ENCODE measurements at regions of chr5 and their contacts with region 1.

Region 1: DNA sequence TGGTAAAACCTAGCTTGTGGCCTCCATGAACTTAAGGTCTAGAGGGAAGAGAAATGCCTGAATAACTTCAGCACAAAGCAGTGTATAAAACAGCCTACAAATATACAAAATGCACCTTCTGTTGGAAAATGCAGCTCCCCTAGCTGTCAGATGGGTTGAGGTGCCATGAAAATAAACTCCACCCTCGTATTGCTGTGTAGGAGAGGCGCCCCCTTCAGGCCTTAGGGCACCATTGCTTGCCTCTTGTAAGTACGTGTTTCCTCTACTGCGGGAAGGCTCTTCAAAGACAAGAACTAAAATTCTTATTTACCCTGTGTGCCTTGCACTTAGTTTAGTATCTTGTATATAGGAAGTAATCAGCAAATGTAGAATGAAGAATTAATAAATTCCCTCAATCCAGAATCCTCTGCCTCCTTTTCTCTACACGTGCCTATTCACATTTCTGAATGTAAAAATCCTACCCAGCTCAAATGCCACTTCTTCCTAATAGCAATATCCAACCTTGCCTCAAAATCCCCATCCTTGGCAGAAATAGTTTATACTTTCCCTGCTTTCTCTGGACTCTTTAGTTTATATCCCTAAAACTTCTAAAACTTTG is 393.7 kb upstream of the PDE4D start:
- DNase-seq: peak; percentile 73
- ATAC-seq: peak; percentile 100
- H3K4me3 Mint-ChIP-seq: no peak overlapping the region
- H3K27ac Mint-ChIP-seq: no peak overlapping the region
- H3K4me1 Mint-ChIP-seq: no peaks in the 10 kb centered on the region
- H3K27me3 Mint-ChIP-seq: no peaks in the 10 kb centered on the region; the same call in 1 of the 2 replicates
- CTCF ChIP-seq: peak; percentile 89

Region 2: GRCh38 chr5:60262576-60263295 is 24.5 kb before region 1 on chr5:
- CTCF ChIA-PET with region 1: interaction called, 12 read pairs
- POLR2A ChIA-PET with region 1: no interaction called
- DNase-seq: no peak
- ATAC-seq: peak; percentile 68
- H3K4me3 Mint-ChIP-seq: no peak overlapping the region
- H3K27ac Mint-ChIP-seq: no peak overlapping the region
- H3K4me1 Mint-ChIP-seq: peaks cover 17% of the 10 kb centered on the region
- H3K27me3 Mint-ChIP-seq: no peaks in the 10 kb centered on the region
- CTCF ChIP-seq: no peak

Measured in WTC11 (cell line).